Activated CD4-positive, alpha-beta memory T cell treated with anti-CD3 and anti-CD28 coated beads for 36 hours (primary cell): ENCODE measurements at regions of chr19 and their contacts with region 1.

Region 1: GRCh38 chr19:49766007-49766937 is 529 bp upstream of the AP2A1 start:
- DNase-seq: peak; percentile 100
- H3K4me3 Mint-ChIP-seq: peak overlapping the region; percentile 96
- H3K27ac Mint-ChIP-seq: peak overlapping the region; percentile 95
- H3K4me1 Mint-ChIP-seq: peaks cover 33% of the 10 kb centered on the region
- H3K27me3 Mint-ChIP-seq: no peaks in the 10 kb centered on the region

Region 2: GRCh38 chr19:49555600-49556411 is 210.5 kb before region 1 on chr19:
- CTCF ChIA-PET with region 1: no interaction called
- POLR2A ChIA-PET with region 1: no interaction called
- intact Hi-C with region 1: loop called (anchors 5 kb)
- DNase-seq: peak; percentile 91
- H3K4me3 Mint-ChIP-seq: peak overlapping the region; percentile 43
- H3K27ac Mint-ChIP-seq: peak overlapping the region; percentile 95
- H3K4me1 Mint-ChIP-seq: peaks cover 73% of the 10 kb centered on the region
- H3K27me3 Mint-ChIP-seq: no peaks in the 10 kb centered on the region

Region 3: DNA sequence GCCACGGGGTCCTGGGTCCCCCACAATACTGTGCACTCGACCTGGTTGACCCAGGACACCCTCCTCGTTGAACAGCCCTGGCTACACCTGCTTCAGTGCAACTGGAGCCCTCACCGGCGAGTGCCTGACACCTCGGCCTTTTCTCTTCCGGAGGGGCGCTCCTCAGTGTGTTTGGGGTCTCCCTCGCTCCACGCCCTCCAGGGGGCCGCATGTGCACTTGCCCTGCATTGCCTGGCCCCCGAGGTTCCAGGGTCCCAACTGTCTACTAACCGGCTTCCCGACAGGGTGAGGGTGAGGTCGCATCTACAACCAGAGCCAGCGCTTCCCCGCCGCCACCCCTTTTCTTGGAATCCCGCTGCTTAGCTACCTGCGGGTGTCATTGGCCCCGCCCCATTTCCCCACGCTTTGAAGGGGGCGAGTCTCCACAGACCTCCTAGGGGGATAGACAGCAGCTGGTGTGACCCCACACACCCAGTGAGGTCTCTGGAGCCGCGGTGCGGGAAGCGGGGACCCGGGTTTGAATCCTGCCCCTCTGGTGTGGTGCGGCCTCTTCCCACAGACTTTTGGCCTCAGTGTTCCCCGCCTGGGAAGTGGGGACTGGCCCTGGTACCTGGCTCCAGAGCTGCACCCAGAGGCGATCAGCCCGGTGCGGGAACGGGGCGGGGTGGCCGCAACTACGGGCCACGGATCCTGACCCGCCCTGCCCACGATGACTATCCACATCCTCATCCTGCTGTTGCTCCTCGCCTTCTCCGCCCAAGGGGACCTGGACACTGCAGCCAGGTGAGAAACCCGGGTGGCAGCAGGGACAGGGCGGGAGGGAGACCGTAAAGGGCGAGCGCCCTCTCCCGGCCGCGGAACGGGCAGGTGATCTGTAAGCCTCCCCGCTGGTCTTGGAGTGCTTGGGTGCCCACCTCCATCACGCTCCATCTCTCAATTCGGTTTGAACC is 76.9 kb before region 1 on chr19 and contains the start of gene ADM5:
- CTCF ChIA-PET with region 1: no interaction called
- POLR2A ChIA-PET with region 1: no interaction called
- intact Hi-C with region 1: no loop called
- DNase-seq: peak; percentile 54
- H3K4me3 Mint-ChIP-seq: peak within 1 kb of the TSS; percentile 75
- H3K27ac Mint-ChIP-seq: no peak within 1 kb of the TSS
- H3K4me1 Mint-ChIP-seq: peaks cover 16% of the 10 kb centered on the region
- H3K27me3 Mint-ChIP-seq: peaks cover 15% of the 10 kb centered on the region
- total RNA-seq, gene ADM5: 2.9 to 3.0 TPM

Region 4: DNA sequence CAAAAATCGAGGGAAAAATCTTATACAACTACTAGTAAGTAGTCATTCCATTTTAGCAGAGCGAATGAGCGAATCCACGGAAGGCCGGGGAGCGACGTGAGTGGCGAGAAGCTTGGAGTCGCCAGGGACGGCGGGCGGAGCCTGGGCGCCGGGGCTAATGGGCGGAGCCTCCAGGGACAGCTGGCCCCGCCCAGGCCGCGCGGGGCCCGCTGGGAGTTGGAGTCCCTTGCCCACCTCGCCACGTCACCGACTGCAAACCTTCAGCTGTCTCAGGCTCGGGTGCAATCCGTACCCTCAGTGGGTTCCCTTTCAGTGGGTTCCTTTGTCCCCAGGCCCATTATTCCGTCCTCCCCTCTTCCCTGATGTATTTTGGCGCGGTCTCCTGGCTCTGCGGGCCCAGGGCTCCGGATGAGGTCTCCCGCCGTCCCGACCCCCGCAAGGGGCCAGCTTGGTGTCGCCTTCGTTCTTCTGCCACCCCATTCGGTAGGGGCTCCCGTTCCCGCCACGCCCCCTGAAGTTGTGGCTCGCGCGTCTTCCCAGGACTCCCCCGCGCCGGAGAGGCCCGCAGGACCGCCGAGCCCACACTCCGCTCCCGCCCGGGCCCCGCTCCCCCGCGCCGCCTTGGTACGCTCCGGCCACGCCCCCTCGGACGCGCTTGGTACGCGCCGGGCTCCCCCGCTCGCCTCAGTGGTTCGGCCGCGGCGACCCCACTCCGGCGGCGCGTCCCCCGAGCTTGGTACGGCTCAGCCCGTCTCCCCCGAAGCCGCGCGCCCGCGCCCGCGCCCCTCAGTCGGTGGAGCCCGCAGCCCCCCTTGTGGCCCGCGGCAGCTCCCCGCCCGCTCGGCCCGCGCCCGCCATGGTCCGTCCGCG is 84.4 kb after region 1 on chr19 and contains the start of gene PTOV1:
- CTCF ChIA-PET with region 1: interaction called, 3 read pairs
- POLR2A ChIA-PET with region 1: no interaction called
- intact Hi-C with region 1: loop called (anchors 2 kb)
- DNase-seq: peak; percentile 93
- H3K4me3 Mint-ChIP-seq: peak within 1 kb of the TSS; percentile 86
- H3K27ac Mint-ChIP-seq: peak within 1 kb of the TSS; percentile 95
- H3K4me1 Mint-ChIP-seq: peaks cover 41% of the 10 kb centered on the region
- H3K27me3 Mint-ChIP-seq: no peaks in the 10 kb centered on the region
- total RNA-seq, gene PTOV1: 105 to 108 TPM

Region 5: DNA sequence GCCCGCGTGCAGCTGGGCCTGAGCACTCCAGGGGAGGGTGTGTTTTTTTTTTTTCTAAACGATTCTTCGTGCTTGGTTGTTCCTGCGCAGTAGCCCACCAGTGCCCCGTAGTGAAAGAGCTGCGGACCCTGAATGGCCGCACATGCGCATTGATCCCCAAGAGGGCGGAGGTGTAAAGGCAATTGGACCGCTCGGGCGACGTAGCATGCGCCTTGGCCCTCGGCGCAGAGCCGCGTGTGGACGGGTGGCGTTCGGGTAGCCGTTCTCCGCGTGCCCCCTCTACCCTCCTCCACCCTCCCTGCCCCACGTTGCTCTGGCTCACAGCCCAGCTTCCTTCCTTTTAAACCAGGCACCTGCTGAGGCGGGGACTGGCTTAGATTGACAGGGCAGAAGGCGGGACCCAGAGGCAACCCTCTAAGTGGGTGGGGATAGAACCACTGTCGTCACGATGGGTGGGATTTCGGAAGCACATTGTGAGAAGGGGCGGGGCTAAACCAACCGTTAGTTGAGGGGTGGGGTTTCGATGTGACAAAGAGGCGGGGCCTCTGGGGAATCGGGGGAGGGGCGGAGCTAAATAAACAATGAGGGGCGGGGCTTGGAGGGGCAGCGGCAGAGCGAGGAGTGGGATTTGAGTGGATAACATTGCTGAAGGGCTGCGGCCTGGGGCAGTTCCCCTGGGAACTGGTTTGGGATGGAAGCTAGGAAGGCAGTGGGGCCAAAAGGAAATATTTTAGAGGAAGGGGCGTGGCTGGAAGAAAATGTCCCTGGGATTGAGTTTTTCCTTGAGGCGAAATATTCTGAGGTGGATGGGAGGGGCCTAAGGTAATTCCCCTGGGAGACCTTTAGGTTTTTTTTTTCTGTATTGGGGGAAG is 163.6 kb after region 1 on chr19:
- CTCF ChIA-PET with region 1: no interaction called
- POLR2A ChIA-PET with region 1: no interaction called
- intact Hi-C with region 1: loop called (anchors 1 kb)
- DNase-seq: peak; percentile 96
- H3K4me3 Mint-ChIP-seq: peak overlapping the region; percentile 98
- H3K27ac Mint-ChIP-seq: peak overlapping the region; percentile 98
- H3K4me1 Mint-ChIP-seq: peaks cover 66% of the 10 kb centered on the region
- H3K27me3 Mint-ChIP-seq: peaks cover 5% of the 10 kb centered on the region